ENCODE measurements at regions of chr2 and their contacts with region 1.

Region 1: GRCh38 chr2:232604535-232604934 is 28.9 kb upstream of the EFHD1 start:
- DNase-seq: no peak
- H3K4me3 ChIP-seq: no peak overlapping the region
- CTCF ChIP-seq: no peak

Region 2: GRCh38 chr2:232592772-232593395 is 11.7 kb before region 1 on chr2:
- CTCF ChIA-PET with region 1: interaction called, 30 read pairs
- POLR2A ChIA-PET with region 1: no interaction called
- DNase-seq: peak; percentile 57
- H3K4me3 ChIP-seq: no peak overlapping the region
- CTCF ChIP-seq: peak; percentile 13

Region 3: DNA sequence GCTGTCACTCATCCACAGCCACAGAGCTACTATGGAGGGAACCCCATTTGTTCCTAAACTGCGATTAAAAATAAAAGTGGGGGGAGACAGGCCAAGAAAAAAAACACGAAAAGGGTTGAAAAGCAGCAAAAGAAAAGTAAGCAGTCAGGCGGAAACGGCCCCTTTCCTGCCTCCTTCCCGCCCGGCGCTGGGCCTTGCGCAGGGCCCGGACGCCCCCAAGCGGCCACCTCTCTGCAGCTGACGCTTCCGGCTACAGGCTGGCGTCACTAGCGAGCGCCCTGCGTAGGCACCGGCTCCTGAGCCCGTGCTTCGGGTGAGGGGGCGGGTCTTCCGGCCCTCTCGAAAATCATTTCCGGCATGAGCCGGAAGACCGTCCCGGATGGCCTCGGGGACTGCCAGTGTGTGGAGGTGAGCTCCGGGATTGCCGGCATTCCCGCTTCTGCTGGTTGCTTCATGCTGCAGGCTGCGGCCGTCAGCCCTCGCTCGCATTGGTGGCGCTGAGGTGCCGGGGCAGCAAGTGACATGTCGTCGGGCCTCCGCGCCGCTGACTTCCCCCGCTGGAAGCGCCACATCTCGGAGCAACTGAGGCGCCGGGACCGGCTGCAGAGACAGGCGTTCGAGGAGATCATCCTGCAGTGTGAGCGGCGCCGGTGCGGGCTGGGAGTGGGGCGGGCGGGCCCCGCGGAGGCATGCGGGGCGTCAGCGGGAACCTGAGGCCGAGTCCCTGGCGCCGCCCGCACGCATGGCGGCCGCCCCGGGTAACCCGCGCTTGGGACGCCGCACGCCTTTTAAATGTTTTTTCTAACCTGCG is 647.0 kb after region 1 on chr2 and contains the start of gene ATG16L1:
- CTCF ChIA-PET with region 1: interaction called, 11 read pairs
- POLR2A ChIA-PET with region 1: no interaction called
- DNase-seq: peak; percentile 70
- H3K4me3 ChIP-seq: peak within 1 kb of the TSS; percentile 100
- CTCF ChIP-seq: peak; percentile 97

Measured in AG04449 (cell line).